ENCODE measurements at regions of chr1 and their contacts with region 1.

Region 1: DNA sequence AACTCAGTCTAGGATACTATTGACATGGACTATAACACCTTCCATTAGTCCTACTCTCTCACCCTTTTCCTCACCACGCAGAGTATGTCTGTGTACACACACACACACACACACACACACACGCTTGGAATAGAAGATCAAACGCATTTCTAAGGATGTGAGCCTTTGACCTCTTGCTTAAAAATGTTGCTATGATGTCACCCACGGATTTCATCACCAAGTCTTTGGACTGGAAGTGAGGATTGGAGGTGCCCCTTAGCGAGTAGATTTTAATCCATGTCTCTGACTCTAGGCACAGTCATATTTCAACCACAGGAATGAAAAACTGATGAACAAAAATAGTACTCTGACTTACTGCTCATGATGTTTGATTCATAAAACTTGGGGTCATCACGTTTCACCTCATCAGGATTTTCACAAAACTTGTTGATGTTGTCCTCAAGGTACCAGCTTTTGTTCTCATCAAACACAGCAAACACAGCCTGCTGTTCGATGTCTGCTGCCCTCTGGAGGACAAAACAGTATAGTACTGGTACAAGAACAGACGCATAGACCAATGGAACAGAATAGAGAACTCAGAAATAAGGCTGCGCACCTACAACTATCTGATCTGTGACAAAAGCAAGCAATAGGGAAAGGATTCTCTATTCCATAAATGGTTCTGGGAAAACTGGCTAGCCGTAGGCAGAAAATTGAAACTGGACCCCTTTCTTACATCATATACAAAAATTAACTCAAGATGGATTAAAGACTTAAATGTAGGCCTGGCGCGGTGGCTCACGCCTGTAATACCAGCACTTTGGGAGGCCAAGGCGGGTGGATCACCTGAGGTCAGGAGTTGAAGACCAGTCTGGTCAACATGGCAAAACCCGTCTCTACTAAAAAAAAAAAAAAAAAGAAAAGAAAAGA is 39.9 kb downstream of the F5 start:
- DNase-seq: no peak
- ATAC-seq: peak; percentile 83

Region 2: DNA sequence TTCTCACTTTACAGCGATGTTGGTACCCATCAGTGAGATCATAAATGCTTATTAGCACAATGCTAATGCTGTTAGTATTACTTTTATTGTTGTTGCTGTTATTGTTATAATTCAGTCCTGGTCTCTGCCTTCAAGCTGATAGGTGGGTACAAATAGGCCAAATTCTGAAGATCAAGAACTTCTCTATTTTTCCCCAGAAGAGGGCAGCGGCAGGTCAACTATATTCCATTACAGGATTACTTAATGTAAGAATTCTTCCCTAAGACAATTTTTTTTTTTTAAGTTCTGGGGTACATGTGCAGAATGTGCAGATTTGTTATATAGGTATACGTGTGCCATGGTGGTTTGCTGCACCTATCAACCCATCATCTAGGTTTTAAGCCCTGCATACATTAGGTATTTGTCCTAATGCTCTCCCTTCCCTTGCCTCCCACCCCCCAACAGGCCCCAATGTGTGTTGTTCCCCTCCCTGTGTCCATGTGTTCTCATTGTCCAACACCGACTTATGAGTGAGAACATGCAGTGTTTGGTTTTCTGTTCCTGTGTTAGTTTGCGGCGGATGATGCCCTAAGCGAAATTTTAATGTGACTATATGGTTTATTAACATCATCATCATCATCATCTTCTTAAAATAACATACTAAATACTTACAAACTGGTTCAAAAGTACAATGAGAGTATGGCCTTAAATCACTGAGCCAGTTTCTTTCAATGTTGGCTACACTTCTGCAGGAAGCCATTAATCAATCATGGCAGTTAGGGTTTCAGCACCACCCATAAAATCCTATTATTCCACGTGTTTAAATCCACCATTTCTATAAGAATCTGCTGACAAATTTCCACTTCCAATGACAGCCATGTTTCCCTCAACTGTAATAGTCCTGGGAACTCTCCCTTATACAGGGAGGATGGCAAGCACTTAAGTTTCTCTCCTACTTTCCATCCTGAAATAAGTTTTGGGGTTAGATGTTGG is 79.8 kb before region 1 on chr1:
- intact Hi-C with region 1: loop called (anchors 5 kb)
- DNase-seq: no peak
- ATAC-seq: peak; percentile 38

Region 3: DNA sequence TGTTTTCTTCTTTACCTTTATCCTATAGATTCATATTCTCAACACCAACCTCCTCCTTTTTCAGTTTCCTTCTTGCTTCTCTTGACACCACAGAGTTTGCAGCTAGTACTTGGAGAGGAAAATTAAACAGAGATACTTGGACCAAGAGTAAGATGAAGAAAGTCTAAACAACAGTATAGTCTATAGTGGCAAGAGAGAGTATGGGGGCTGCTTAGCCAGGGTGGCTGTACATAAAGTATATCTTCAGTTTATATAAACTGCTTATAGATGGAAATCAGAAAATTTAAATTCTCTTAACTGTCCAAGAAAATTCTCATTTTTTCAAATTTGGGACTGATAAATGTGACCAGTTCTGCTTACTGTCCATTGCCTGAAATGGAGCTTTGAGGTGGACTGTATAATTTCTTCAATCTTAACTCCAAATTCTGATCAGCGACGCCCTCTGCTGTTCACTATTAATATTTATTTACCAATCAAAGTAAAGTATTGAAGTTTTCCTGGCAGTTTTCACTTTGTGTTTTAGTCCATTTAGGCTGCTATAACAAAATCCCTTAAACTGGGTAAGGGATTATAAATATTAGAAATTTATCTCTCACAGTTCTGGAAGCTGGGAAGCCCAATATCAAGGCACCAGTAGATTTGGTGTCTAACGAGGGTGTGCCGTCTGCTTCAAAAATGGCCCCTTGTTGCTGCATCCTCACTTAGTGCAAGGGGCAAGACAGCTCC is 263.2 kb after region 1 on chr1:
- intact Hi-C with region 1: loop called (anchors 5 kb)
- DNase-seq: no peak
- ATAC-seq: no peak